Heart left ventricle (tissue), 16 donors: ENCODE measurements at regions of chr1 and their contacts with region 1.

Region 1: GRCh38 chr1:185670187-185670627 is 64.0 kb upstream of the HMCN1 start:
- DNase-seq: peak in 3 of 5 donors; percentile 29 to 52 (median 40)
- ATAC-seq: peak; percentile 48 to 77 (median 70)
- H3K4me3 ChIP-seq: peak overlapping the region in 5 of 12 donors; percentile 2 to 22 (median 13)
- H3K27ac ChIP-seq: peak overlapping the region in 2 of 12 donors; percentile 7 to 54
- H3K4me1 ChIP-seq: peaks cover 0 to 42% (median 12%) of the 10 kb centered on the region in 12 donors
- H3K27me3 ChIP-seq: no peaks in the 10 kb centered on the region
- CTCF ChIP-seq: peak; percentile 37 to 79 (median 66)
- POLR2A ChIP-seq: no peak

Region 2: GRCh38 chr1:185156854-185157598 is 513.2 kb before region 1 on chr1 and contains the starts of genes SWT1 and TRMT1L:
- intact Hi-C with region 1: loop called in 3 of 10 experiments (anchors 10 kb)
- DNase-seq: peak; percentile 99 to 100 (median 99)
- ATAC-seq: peak; percentile 96 to 98 (median 98)
- H3K4me3 ChIP-seq: peak within 1 kb of the TSS; percentile 70 to 92 (median 80)
- H3K27ac ChIP-seq: peak within 1 kb of the TSS; percentile 86 to 99 (median 97)
- H3K4me1 ChIP-seq: peaks cover 0 to 55% (median 34%) of the 10 kb centered on the region in 12 donors
- H3K27me3 ChIP-seq: no peaks in the 10 kb centered on the region
- CTCF ChIP-seq: no peak
- POLR2A ChIP-seq: peak; percentile 91 to 98
- total RNA-seq, gene SWT1: 3.9 to 8.5 (median 5.5) TPM
- total RNA-seq, gene TRMT1L: 21.6 to 42.3 (median 30.8) TPM

Region 3: DNA sequence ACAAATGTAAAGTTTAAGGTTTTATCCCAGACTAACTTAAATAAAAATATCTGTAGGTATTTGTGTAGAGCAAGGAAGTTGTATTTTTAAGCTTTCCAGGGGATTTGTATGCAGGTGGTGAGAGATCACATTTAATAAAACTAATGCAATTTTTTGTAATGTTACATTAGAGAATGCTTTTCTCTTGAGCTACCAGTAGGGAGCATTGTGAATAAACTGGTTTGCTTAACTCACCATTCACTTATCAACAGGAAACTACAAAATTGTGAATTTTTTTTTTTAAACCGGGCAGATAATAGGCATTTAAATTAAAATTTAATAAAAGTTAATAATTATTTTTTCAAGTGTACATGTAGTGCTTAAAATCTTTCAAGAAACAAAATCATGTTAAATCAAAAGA is 431.8 kb before region 1 on chr1:
- intact Hi-C with region 1: loop called in 9 of 10 experiments (anchors 2 to 10 kb)
- DNase-seq: no peak
- ATAC-seq: no peak
- H3K4me3 ChIP-seq: no peak overlapping the region
- H3K27ac ChIP-seq: no peak overlapping the region
- H3K4me1 ChIP-seq: peaks cover 0 to 16% (median 6%) of the 10 kb centered on the region in 12 donors
- H3K27me3 ChIP-seq: no peaks in the 10 kb centered on the region
- CTCF ChIP-seq: peak; percentile 21 to 62 (median 43)
- POLR2A ChIP-seq: no peak

Region 4: DNA sequence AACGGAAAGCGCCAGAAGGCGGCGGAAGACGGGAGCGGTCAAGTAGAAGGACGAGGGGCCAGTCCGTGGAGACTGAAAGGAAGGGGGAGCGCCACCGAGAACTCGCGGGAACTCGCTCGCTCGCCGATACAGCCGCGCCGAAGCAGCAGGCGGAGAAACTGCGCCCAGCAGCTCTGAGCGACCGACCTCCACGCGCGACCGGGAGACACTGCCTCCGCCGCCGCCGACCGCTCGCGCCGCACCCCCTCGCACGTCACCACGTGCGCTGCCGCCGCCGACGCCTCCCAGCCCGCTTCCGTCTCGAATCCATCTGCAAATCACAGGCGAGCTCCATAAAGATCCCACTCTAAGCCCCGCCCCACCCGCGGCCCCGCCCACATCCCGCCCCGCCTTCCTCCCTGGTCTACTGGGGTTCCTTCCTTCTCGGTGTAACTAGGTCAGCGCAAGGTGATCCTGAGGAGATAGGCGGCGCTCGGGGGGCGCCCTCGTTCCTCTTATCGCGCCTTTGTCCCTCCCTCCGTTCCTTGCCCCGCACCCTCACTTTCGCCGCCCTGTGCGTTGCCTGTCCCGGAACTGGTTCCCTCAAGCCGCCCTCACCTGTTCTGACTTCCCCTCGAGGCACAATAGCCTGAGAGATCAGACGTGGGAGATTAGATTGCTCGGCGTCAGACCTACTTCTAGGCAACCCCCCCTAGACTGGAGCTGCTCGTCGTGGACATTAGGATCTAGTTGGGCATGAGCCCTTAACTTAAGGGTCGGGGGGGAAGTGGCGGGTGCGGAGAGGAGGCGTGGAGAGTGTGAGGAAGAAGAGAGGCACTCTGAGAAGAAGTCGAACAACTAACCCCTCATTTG is 352.9 kb before region 1 on chr1 and contains the start of gene IVNS1ABP:
- intact Hi-C with region 1: loop called in 9 of 10 experiments (anchors 2 to 5 kb)
- DNase-seq: peak; percentile 95 to 98 (median 96)
- ATAC-seq: peak; percentile 90 to 94 (median 92)
- H3K4me3 ChIP-seq: peak within 1 kb of the TSS; percentile 66 to 99 (median 90)
- H3K27ac ChIP-seq: peak within 1 kb of the TSS; percentile 87 to 99 (median 96)
- H3K4me1 ChIP-seq: peaks cover 0 to 51% (median 32%) of the 10 kb centered on the region in 12 donors
- H3K27me3 ChIP-seq: no peaks in the 10 kb centered on the region
- CTCF ChIP-seq: peak in 3 of 12 donors; percentile 10 to 37 (median 12)
- POLR2A ChIP-seq: peak; percentile 87 to 97
- total RNA-seq, gene IVNS1ABP: 24.7 to 95.2 (median 60.6) TPM

Region 5: GRCh38 chr1:185439727-185440415 is 230.3 kb before region 1 on chr1:
- intact Hi-C with region 1: loop called in 1 of 10 experiments (anchors 10 kb)
- DNase-seq: peak in 1 of 5 donors; percentile 32
- ATAC-seq: peak in 3 of 4 donors; percentile 56 to 82 (median 64)
- H3K4me3 ChIP-seq: no peak overlapping the region
- H3K27ac ChIP-seq: peak overlapping the region in 3 of 12 donors; percentile 0 to 75 (median 32)
- H3K4me1 ChIP-seq: peaks cover 0 to 30% (median 3%) of the 10 kb centered on the region in 12 donors
- H3K27me3 ChIP-seq: no peaks in the 10 kb centered on the region
- CTCF ChIP-seq: no peak
- POLR2A ChIP-seq: no peak

Region 6: DNA sequence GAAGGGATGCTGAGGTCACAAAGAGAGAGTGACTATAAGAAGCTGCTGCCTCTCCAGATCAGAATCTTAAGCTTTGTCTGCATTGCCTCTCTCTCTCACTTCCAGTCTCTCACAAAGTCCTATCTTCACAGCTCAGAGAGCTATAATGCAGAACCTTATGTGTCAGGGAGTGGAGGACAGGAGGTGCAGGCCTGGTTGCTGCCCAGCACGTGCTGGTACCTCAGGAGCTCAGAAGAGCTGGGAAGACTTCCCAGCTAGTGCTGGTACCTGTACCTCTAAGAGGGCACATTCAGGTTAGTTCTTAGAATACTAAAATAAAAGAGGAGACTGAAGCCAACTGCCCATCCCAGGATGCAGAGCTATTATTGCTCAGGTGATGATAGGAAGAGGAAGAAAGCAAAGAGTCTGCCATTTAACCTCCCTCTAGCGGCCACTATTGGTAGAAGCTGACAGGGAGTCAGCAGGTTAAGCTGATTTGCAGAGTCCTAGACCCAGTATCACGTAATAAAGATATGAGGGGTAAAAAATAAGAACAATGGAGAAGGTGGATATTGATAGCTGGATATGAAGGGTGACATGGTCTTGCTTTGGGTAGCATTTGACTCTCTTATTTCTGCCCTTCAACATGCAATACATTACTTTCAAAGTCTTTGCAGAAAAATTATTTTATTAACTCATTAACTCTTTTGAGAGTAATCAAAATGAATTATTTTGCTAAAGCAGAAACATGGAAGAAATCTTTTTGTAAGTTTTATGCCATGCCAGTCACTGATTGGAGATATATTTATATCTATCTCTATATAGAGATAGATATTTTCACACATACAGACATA is 74.2 kb before region 1 on chr1:
- intact Hi-C with region 1: loop called in 3 of 10 experiments (anchors 5 to 10 kb)
- DNase-seq: peak in 1 of 5 donors; percentile 26
- ATAC-seq: peak in 3 of 4 donors; percentile 21 to 61 (median 48)
- H3K4me3 ChIP-seq: no peak overlapping the region
- H3K27ac ChIP-seq: peak overlapping the region in 8 of 12 donors; percentile 30 to 88 (median 68)
- H3K4me1 ChIP-seq: peaks cover 0 to 38% (median 21%) of the 10 kb centered on the region in 12 donors
- H3K27me3 ChIP-seq: no peaks in the 10 kb centered on the region
- CTCF ChIP-seq: peak; percentile 17 to 59 (median 42)
- POLR2A ChIP-seq: no peak